Right ventricle myocardium inferior (tissue), 1 donor: ENCODE measurements at regions of chr13 and their contacts with region 1.

Region 1: GRCh38 chr13:42039946-42040729 is 8.3 kb upstream of the DGKH start:
- DNase-seq: peak; percentile 95
- ATAC-seq: peak; percentile 95

Region 2: GRCh38 chr13:41668130-41668757 is 371.9 kb before region 1 on chr13:
- intact Hi-C with region 1: loop called (anchors 10 kb)
- DNase-seq: no peak
- ATAC-seq: peak; percentile 92

Region 3: DNA sequence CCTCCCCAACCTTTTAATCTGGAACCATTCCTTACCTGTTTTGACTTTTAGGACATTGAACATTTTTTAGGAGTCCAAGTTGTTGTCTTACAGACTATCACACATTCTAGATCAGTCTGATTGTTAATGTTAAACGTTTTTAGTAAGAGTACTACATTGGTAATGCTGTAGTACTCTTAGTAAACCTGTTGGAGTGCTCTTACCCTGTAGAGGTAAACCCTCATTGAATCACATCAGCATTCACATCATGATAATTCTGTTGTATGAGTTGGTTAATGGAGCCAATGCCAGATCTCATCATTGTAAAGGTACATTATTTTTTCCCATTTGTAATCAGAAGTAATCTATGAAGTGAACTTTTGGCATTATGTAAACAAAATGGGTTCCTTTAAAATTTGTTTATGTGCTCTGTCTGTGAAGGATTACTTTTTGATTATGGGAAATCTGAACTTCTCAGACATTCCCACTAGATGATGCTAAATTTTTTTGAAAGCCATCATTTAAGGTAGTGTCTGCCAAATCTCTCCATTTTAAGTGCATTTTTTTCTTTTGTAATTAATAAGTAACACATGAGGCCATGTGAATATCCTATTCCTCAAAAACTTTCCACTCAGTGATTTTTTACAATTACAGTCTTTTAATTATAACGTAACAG is 134.4 kb before region 1 on chr13:
- intact Hi-C with region 1: loop called (anchors 5 kb)
- DNase-seq: no peak
- ATAC-seq: no peak

Region 4: DNA sequence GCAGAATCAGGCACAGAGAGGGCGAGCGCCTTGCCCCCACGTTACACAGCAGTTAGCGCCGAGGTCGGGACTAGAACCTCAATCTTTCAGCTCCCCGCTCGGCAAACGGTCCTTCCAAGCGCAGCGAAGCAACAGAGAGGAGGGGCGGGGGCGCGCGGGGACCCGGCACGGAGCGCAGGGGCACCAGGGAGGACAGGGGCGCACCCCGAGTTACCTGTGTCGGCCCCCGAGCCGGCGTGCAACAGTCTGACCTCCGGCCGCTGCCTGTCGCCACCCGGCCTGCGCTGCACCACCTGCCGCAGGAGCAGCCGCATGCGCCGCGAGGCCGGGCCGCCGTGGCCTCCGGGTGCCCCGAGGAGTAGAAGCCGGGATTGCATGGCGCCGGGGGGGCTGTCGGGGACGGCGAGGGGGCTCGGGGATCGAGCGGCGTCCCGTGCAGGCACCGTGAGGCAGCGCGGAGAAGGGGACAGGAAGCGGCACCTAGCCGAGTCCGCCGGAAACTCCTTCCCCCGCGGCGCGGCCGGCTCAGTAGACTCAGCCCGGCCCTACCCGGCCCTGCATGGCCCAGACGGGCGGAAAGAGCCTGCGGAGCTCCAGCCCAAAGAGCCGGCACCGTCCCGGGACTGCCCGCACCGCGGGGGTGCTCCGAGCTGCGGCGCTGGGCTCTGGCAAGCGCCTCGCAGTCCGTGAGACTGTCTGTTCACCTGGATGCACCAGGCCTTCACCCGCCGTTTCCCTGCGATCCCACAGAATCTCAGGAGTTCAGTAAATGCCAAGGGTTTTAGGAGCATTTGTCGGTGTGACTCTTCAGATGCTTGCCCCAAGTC is 79.3 kb before region 1 on chr13 and contains the start of gene VWA8:
- intact Hi-C with region 1: loop called (anchors 2 kb)
- DNase-seq: peak; percentile 91
- ATAC-seq: peak; percentile 96
- total RNA-seq, gene VWA8: 40.1 TPM

Region 5: GRCh38 chr13:42574435-42575311 is 534.5 kb after region 1 on chr13:
- intact Hi-C with region 1: no loop called
- DNase-seq: no peak
- ATAC-seq: no peak